Activated T-helper 1 cell treated with anti-CD3 and anti-CD28 coated beads, Interleukin-12 subunit alpha, Interleukin-12 subunit beta, Interleukin-2, Interleukin-4 antibody, amounts not matched to agents 30 ng/mL and 10 ng/mL and 1 ng/mL, durations not matched to agents 14 hours and 24 hours and 36 hours (primary cell): ENCODE measurements at regions of chr7 and their contacts with region 1.

Region 1: DNA sequence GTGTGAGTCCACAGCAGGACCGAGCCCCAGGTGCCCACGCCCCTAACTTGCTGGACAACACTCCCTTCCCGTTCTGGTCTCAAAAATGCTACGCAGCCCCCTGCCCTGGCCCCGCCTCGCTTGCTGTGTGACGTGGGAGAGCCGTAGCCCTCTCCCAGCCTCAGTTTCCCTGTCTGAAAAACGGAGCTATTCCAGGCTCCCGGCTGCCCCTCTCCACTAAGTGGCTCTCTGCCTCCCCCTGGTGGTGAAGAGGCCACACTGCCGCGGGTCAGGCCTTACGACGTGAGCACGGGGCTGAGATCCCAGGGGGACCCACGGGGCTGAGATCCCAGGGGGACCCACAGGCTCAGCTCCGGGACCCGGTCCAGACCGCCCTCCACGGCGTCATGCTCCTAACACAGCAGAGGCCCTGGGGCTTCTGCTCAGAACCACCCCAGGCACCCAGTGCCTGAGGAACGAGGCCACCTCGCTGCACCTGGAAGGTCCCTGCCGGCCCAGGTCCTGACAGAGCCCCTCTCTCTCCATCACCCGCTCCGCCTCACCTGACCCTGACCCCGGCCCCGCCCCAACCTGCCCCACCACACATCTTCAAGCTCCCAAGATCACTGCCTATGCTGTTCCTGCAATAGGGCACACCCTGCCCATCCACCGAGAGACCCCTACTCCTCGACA is 26.7 kb downstream of the MICALL2 start:
- DNase-seq: peak; percentile 54
- H3K4me3 Mint-ChIP-seq: no peak overlapping the region
- H3K27ac Mint-ChIP-seq: no peak overlapping the region
- H3K4me1 Mint-ChIP-seq: peaks cover 5% of the 10 kb centered on the region
- H3K27me3 Mint-ChIP-seq: peaks cover 4% of the 10 kb centered on the region

Region 2: DNA sequence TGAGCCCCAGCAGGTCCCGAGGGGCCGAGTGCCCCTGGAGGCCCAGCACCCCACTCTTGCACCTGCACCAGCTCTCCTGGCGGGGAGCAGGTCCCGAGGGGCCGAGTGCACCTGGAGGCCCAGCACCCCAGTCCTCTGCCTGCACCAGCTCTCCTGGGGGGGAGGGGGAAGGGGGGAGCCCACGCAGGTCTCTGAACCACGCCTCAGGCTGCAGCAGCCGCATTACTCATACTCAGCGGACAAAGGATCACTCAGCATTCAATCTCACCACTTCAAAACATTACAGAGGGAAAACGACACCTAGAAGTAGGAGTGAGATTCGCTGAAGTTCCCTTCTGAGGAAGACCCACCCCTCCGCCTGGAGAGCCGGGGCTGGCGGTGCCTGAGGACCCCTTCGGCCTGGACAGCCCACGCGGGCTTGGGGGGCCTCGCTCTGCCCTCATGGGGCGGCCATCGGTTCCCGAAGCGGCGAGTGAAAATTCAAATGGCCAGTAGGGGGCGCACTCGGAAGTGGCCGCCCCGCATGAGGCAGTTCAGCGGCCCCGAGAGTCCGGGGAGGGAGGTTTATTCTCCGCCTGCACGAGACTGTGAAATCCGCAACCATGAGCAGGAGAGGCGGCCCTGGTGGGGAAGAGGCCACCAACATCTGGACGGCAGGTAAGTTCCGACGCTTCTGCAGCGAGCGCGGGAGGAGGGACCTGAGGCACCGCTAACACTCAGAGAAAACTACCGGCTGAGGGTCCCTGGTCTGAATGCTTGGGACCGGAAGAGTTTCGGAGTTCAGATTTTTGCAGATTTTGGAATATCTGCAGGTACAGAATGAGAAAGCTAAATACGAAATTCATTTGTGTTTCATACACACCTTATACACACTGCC is 345.7 kb before region 1 on chr7:
- intact Hi-C with region 1: no loop called
- DNase-seq: peak; percentile 61
- H3K4me3 Mint-ChIP-seq: peak overlapping the region; percentile 63
- H3K27ac Mint-ChIP-seq: no peak overlapping the region
- H3K4me1 Mint-ChIP-seq: peaks cover 9% of the 10 kb centered on the region
- H3K27me3 Mint-ChIP-seq: peaks cover 2% of the 10 kb centered on the region

Region 3: GRCh38 chr7:1193593-1194424 is 238.7 kb before region 1 on chr7:
- intact Hi-C with region 1: loop called (anchors 5 kb)
- DNase-seq: no peak
- H3K4me3 Mint-ChIP-seq: no peak overlapping the region
- H3K27ac Mint-ChIP-seq: no peak overlapping the region
- H3K4me1 Mint-ChIP-seq: peaks cover 27% of the 10 kb centered on the region
- H3K27me3 Mint-ChIP-seq: peaks cover 3% of the 10 kb centered on the region

Region 4: GRCh38 chr7:1225441-1226185 is 206.9 kb before region 1 on chr7:
- intact Hi-C with region 1: loop called (anchors 1 kb)
- DNase-seq: peak; percentile 13
- H3K4me3 Mint-ChIP-seq: no peak overlapping the region
- H3K27ac Mint-ChIP-seq: peak overlapping the region; percentile 70
- H3K4me1 Mint-ChIP-seq: no peaks in the 10 kb centered on the region
- H3K27me3 Mint-ChIP-seq: peaks cover 54% of the 10 kb centered on the region

Region 5: DNA sequence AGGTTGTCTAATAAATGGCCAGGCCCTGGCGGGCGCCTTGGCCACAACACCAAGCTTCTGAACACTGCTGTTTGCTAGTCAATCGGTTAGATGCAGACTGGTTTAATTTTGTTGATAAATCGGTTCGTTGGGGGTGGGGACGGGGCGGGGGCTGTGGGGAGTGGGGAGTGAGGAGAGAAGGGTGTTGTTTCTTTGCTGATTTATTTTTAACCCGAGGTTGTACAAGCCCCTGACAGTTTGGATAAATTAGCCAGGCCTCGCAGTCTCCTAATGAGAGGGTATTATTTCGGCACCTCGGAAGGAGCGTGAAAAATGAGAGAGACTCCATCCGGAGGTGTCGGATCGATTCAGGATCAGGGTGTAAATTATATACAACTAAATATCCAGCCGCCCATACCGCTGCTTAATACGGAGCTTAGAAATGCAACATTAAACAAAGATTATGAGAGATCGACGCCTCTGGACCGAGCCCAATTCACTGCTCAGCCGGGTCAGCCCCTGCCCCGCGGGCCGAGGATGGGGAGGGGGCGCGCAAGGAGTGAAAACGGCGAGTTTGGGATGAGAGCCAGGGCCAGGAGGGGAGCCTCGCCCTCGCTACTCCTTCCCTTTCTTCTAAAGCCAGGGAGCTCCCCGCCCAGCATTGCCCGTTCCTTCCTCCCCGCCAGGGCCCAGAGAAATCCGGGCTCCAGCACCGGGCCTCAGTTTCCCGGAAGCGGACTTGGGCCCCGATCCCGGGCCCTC is 191.9 kb before region 1 on chr7:
- intact Hi-C with region 1: loop called (anchors 5 kb)
- DNase-seq: no peak
- H3K4me3 Mint-ChIP-seq: no peak overlapping the region
- H3K27ac Mint-ChIP-seq: peak overlapping the region; percentile 52
- H3K4me1 Mint-ChIP-seq: no peaks in the 10 kb centered on the region
- H3K27me3 Mint-ChIP-seq: peaks cover 55% of the 10 kb centered on the region